Activated CD4-positive, alpha-beta T cell treated with anti-CD3 and anti-CD28 coated beads for 36 hours (primary cell): ENCODE measurements at regions of chr19 and their contacts with region 1.

Region 1: GRCh38 chr19:49391581-49392399 is 3.7 kb downstream of the KASH5 start:
- DNase-seq: peak; percentile 90
- ATAC-seq: peak; percentile 83
- H3K4me3 Mint-ChIP-seq: no peak overlapping the region
- H3K27ac Mint-ChIP-seq: no peak overlapping the region
- H3K4me1 Mint-ChIP-seq: peaks cover 16% of the 10 kb centered on the region
- H3K27me3 Mint-ChIP-seq: no peaks in the 10 kb centered on the region

Region 2: DNA sequence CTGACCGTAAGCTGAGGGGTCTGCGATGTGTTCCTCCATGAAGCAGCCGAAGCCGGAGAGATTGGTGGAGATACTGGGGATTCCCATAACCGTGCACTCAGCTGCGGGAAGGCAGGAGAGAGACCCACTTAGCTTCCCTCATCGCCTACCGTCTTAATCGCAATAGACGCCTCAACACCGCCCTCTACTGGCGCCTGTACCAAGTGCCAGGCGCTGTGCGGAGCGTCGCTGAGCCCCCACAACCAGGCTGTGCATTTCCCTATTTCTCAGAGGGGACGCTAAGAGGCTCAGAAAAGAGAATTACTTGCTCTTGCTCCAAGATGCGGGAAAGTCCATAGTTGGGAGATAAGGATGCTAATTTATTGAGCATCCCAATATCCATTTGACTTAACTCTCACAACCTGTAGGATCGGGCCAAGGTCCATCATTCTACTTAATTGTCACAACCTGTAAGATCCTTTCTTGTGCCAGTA is 420.8 kb before region 1 on chr19:
- CTCF ChIA-PET with region 1: no interaction called
- POLR2A ChIA-PET with region 1: no interaction called
- intact Hi-C with region 1: no loop called
- DNase-seq: peak; percentile 91
- ATAC-seq: peak; percentile 84
- H3K4me3 Mint-ChIP-seq: no peak overlapping the region
- H3K27ac Mint-ChIP-seq: no peak overlapping the region
- H3K4me1 Mint-ChIP-seq: peaks cover 17% of the 10 kb centered on the region
- H3K27me3 Mint-ChIP-seq: no peaks in the 10 kb centered on the region

Region 3: DNA sequence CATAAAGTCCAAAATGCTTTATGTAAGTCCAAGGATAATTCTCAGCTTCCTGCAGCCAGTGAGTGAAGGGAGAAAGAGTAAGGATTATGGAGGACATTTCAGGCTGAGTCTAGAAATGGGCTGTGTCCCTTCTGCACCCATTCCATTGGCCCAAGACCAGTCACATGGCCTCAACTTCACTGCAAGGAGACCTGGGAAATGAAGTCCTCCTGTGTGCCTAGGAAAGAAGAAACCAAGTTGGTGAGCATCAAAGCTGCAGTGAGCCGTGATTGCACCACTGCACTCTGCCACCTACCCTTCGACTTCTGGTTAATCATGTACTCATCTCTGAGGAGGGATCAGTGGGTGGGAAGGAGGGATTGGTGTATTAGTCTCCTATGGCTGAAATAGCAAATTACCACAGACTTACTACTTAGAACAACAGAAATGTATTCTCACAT is 60.2 kb before region 1 on chr19:
- CTCF ChIA-PET with region 1: no interaction called
- POLR2A ChIA-PET with region 1: no interaction called
- intact Hi-C with region 1: loop called in 1 of 2 experiments (anchors 1 kb)
- DNase-seq: peak; percentile 80
- ATAC-seq: peak; percentile 80
- H3K4me3 Mint-ChIP-seq: peak overlapping the region; percentile 33
- H3K27ac Mint-ChIP-seq: peak overlapping the region; percentile 75
- H3K4me1 Mint-ChIP-seq: peaks cover 81% of the 10 kb centered on the region
- H3K27me3 Mint-ChIP-seq: no peaks in the 10 kb centered on the region

Region 4: DNA sequence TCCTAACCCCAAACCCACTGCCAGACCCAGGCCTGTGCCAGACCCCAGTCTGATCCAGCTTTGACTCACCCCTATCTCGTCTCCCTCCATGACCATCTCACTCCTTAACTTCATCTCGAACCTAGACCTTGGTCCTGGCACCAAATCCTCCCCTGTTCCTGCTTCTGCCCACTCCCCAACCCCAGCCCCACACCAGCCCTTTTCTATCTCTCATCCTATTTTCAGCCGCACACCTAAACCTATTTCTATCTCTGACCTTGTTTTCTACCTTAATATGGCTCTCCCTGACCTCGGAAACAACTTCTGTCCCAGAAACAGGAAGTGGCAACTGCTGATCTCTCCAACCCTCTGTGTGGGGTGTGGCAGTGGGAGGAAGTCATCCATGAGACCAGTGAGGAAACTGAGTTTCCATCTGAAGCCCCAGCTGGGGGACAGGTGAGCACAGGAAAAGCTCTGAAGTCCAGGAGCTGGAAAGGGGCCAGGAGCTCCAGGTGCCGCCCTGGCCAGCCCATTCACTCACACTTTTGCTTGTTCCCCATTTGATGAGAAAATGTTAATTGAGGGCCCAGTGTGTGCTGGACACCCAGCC is 17.7 kb after region 1 on chr19:
- CTCF ChIA-PET with region 1: interaction called, 12 read pairs
- POLR2A ChIA-PET with region 1: interaction called, 3 read pairs
- intact Hi-C with region 1: no loop called
- DNase-seq: no peak
- ATAC-seq: peak; percentile 60
- H3K4me3 Mint-ChIP-seq: peak overlapping the region; percentile 17
- H3K27ac Mint-ChIP-seq: peak overlapping the region; percentile 83
- H3K4me1 Mint-ChIP-seq: peaks cover 60% of the 10 kb centered on the region
- H3K27me3 Mint-ChIP-seq: no peaks in the 10 kb centered on the region

Region 5: GRCh38 chr19:49430678-49431329 is 39.0 kb after region 1 on chr19:
- CTCF ChIA-PET with region 1: interaction called, 13 read pairs
- POLR2A ChIA-PET with region 1: no interaction called
- intact Hi-C with region 1: loop called in 1 of 2 experiments (anchors 1 kb)
- DNase-seq: peak; percentile 71
- ATAC-seq: peak; percentile 63
- H3K4me3 Mint-ChIP-seq: no peak overlapping the region
- H3K27ac Mint-ChIP-seq: no peak overlapping the region
- H3K4me1 Mint-ChIP-seq: peaks cover 34% of the 10 kb centered on the region
- H3K27me3 Mint-ChIP-seq: peaks cover 76% of the 10 kb centered on the region

Region 6: GRCh38 chr19:49468746-49469447 is 77.1 kb after region 1 on chr19:
- CTCF ChIA-PET with region 1: interaction called, 6 read pairs
- POLR2A ChIA-PET with region 1: no interaction called
- intact Hi-C with region 1: loop called (anchors 1 kb)
- DNase-seq: peak; percentile 88
- ATAC-seq: peak; percentile 75
- H3K4me3 Mint-ChIP-seq: peak overlapping the region; percentile 64
- H3K27ac Mint-ChIP-seq: peak overlapping the region; percentile 98
- H3K4me1 Mint-ChIP-seq: peaks cover 49% of the 10 kb centered on the region
- H3K27me3 Mint-ChIP-seq: no peaks in the 10 kb centered on the region